GM12878 (cell line): ENCODE measurements at regions of chr9 and their contacts with region 1.

Region 1: DNA sequence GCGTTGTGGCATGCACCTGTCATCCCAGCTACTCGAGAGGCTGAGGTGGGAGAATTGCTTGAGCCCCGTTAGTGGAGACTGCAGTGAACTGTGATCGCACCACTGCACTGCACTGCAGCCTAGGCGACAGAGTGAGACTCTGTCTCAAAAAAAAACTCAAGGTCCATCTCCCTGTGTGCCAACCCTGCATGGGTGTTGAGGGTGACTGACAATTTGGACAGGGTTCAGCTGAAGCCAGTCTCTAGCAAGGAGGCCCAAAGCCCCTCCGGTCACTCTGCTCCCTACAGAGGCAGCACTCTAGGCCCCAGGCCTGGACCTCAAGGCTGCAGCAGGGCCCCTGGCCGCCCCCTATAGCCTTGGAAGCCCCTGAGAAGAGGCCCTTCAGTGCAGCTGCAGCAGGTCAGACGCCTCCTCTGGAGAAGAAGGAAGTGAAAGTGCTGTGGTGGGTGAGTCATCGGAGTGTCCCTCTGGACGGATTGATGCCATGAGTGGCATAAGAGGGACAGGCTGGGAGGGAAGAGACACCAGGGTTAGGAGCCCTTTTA is 39.2 kb upstream of the NEK6 start:
- DNase-seq: peak; percentile 92
- ATAC-seq: peak; percentile 76
- H3K4me3 ChIP-seq: no peak overlapping the region; the same call in 1 of the 2 replicates
- H3K27ac ChIP-seq: peak overlapping the region; percentile 98
- H3K4me1 ChIP-seq: peaks cover 54% of the 10 kb centered on the region
- H3K27me3 ChIP-seq: no peaks in the 10 kb centered on the region
- CTCF ChIP-seq: no peak
- EP300 ChIP-seq: peak; percentile 70 to 97; a peak in 3 of 4 replicates
- POLR2A ChIP-seq: peak; percentile 45
- RAD21 ChIP-seq: peak; percentile 41; the same call in 1 of the 2 replicates

Region 2: GRCh38 chr9:124133727-124134126 is 84.8 kb before region 1 on chr9:
- CTCF ChIA-PET with region 1: interaction called, 12 read pairs
- POLR2A ChIA-PET with region 1: interaction called, 13 read pairs
- RAD21 ChIA-PET with region 1: interaction called, 23 read pairs
- SMC1A ChIA-PET with region 1: interaction called, 28 read pairs
- in situ Hi-C with region 1: no loop called
- intact Hi-C with region 1: loop called (anchors 1 kb)
- DNase-seq: no peak
- ATAC-seq: peak; percentile 29
- H3K4me3 ChIP-seq: no peak overlapping the region
- H3K27ac ChIP-seq: no peak overlapping the region
- H3K4me1 ChIP-seq: peaks cover 21% of the 10 kb centered on the region
- H3K27me3 ChIP-seq: no peaks in the 10 kb centered on the region
- CTCF ChIP-seq: peak; percentile 27 to 63 (median 31); a peak in 4 of 6 replicates
- EP300 ChIP-seq: no peak
- POLR2A ChIP-seq: no peak
- RAD21 ChIP-seq: peak; percentile 46

Region 3: DNA sequence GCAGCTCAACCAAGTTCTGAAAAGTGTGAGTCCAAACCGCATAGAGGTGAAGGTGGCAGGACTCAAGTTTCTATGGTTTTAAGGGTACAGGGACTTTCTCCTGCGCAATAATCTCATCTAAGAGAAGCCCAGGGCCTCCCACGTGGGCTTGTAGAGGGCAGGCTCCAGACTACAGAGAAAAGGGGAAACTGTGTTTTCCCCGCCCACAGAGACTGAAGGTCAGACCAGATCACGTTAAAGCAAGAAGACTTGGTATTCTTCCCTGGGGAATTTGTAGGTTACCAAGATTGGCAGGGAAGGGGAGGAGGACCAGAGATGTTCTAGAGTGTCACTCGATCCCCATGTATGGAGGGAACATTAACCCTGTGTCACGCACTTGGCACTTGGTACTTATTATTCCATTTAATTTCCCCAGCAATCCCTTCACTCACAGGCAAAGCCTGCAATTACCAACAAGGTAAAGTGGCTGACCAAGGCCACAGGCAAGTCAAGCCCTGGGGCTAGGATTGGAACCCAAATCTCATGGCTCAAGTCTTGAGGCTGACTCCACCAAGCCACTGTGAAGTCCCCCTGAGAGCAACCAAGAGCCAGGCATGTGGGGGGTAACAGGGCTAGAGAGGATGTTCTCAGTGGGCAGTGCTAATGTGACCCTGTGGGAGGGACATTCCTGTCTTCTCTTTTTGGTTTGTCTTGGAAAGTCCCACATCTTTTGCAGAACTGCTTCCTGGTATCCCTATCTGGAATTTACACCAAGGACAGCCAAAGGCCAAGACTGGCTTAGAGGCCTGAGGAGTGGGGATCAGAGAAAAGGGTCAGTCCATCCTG is 21.0 kb after region 1 on chr9:
- CTCF ChIA-PET with region 1: interaction called, 5 read pairs
- POLR2A ChIA-PET with region 1: interaction called, 15 read pairs
- RAD21 ChIA-PET with region 1: interaction called, 84 read pairs
- SMC1A ChIA-PET with region 1: interaction called, 23 read pairs
- in situ Hi-C with region 1: no loop called
- intact Hi-C with region 1: loop called (anchors 1 kb)
- DNase-seq: peak; percentile 72
- ATAC-seq: peak; percentile 95
- H3K4me3 ChIP-seq: no peak overlapping the region
- H3K27ac ChIP-seq: peak overlapping the region; percentile 89
- H3K4me1 ChIP-seq: peaks cover 39% of the 10 kb centered on the region
- H3K27me3 ChIP-seq: no peaks in the 10 kb centered on the region
- CTCF ChIP-seq: no peak
- EP300 ChIP-seq: peak; percentile 37 to 52; a peak in 2 of 4 replicates
- POLR2A ChIP-seq: no peak
- RAD21 ChIP-seq: no peak

Region 4: DNA sequence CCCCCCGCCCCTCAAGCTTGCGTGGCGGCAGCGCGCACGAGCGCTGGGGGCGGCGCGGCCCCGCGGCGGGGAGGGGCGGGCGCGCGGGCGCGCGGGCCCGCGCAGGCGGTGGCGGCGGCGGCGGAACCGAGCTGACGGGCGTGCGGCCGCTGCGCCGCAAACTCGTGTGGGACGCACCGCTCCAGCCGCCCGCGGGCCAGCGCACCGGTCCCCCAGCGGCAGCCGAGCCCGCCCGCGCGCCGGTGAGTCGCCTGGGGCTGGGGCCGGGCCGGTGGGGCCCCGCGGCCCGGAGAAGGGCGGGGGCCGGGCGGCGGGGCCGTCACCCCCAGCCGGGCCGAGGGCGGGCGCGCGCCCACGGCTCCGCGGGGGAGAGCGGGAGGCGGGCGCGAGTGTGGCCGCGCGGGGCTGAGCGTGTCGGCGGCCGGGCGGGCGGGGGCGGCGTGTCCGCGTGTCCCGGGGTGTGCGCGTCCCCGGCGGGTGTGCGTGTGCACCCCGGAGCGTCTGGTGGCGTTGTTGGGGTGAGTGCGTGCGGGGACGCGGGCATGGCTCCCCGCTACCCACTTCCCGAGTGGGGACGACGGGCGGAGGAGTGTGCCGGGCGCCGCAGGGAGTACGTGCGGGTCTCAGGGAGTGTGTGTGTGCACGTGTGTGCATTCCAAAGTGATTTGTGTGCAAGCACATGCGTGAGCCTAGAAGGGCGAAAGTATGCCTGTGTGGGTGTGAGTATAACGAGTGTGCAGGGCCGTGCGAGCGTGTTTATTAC is 39.5 kb after region 1 on chr9 and contains the start of gene NEK6:
- CTCF ChIA-PET with region 1: interaction called, 6 read pairs
- POLR2A ChIA-PET with region 1: interaction called, 30 read pairs
- RAD21 ChIA-PET with region 1: interaction called, 38 read pairs
- SMC1A ChIA-PET with region 1: interaction called, 34 read pairs
- in situ Hi-C with region 1: no loop called
- intact Hi-C with region 1: loop called (anchors 1 kb)
- DNase-seq: no peak
- ATAC-seq: peak; percentile 2
- H3K4me3 ChIP-seq: peak within 1 kb of the TSS; percentile 95
- H3K27ac ChIP-seq: peak within 1 kb of the TSS; percentile 88
- H3K4me1 ChIP-seq: peaks cover 35% of the 10 kb centered on the region
- H3K27me3 ChIP-seq: no peaks in the 10 kb centered on the region
- CTCF ChIP-seq: no peak
- EP300 ChIP-seq: no peak
- POLR2A ChIP-seq: peak; percentile 72
- RAD21 ChIP-seq: no peak
- polyA plus RNA-seq, gene NEK6: 31.3 to 33.2 TPM

Region 5: DNA sequence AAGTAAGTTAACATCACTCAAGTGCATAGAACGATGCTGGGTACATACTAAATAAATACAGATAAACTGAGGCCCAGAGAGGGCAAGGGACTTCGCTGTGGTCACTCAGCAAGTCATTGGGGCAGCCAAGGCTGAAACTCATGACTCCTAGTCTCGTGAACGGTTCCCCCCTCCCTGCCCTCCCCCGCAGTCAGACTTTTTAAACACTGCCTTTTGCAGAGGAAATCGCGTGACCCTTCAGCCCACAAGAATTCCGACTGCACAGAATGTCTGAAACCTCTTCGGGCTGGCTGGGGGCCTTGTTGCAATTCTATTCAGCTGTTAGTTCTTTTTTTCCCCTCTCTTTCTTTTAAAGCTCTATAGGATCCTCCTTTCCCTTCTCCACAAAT is 67.4 kb after region 1 on chr9:
- CTCF ChIA-PET with region 1: interaction called, 24 read pairs
- POLR2A ChIA-PET with region 1: interaction called, 14 read pairs
- RAD21 ChIA-PET with region 1: interaction called, 38 read pairs
- SMC1A ChIA-PET with region 1: interaction called, 56 read pairs
- in situ Hi-C with region 1: no loop called
- intact Hi-C with region 1: loop called (anchors 1 kb)
- DNase-seq: peak; percentile 70
- ATAC-seq: peak; percentile 62
- H3K4me3 ChIP-seq: peak overlapping the region; percentile 54
- H3K27ac ChIP-seq: peak overlapping the region; percentile 97
- H3K4me1 ChIP-seq: peaks cover 72% of the 10 kb centered on the region
- H3K27me3 ChIP-seq: no peaks in the 10 kb centered on the region
- CTCF ChIP-seq: no peak
- EP300 ChIP-seq: peak; percentile 77 to 93
- POLR2A ChIP-seq: no peak
- RAD21 ChIP-seq: peak; percentile 17; the same call in 1 of the 2 replicates